HEK293 (cell line): ENCODE measurements at regions of chr3 and their contacts with region 1.

Region 1: GRCh38 chr3:160003520-160004128 is 15.0 kb downstream of the IL12A start:
- H3K4me3 ChIP-seq: no peak overlapping the region
- H3K27ac ChIP-seq: no peak overlapping the region
- H3K4me1 ChIP-seq: no peaks in the 10 kb centered on the region
- CTCF ChIP-seq: peak; percentile 46; the same call in 1 of the 2 replicates

Region 2: DNA sequence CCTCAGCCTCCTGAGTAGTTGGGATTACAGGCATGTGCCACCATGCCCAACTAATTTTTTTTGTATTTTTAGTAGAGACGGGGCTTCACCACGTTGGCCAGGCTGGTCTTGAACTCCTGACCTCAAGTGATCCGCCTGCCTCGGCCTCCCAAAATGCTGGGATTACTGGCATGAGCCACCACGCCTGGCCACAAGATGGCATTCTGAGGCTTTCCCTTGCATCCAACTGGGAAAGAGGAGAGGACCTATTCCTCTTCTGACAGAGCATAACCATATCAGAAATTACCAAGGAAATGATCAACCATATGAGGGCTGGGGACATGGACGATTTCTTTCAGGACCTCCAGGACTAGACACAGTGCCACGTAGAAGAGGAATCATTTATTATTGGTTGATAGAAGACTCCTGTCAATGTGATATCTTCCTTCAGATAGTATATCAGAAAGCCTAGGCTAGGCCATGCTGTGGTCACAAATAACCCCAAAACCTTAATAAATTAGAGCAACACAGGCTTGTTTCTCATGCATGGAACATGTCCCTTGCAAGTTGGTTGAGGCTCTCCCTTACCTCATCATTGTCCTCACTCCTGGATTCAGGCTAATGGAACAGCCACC is 387.3 kb before region 1 on chr3:
- CTCF ChIA-PET with region 1: interaction called, 10 read pairs
- POLR2A ChIA-PET with region 1: no interaction called
- H3K4me3 ChIP-seq: no peak overlapping the region
- H3K27ac ChIP-seq: no peak overlapping the region
- H3K4me1 ChIP-seq: peaks cover 25% of the 10 kb centered on the region
- CTCF ChIP-seq: peak; percentile 71

Region 3: GRCh38 chr3:159828542-159828943 is 175.1 kb before region 1 on chr3:
- CTCF ChIA-PET with region 1: interaction called, 38 read pairs
- POLR2A ChIA-PET with region 1: no interaction called
- H3K4me3 ChIP-seq: no peak overlapping the region
- H3K27ac ChIP-seq: peak overlapping the region; percentile 55
- H3K4me1 ChIP-seq: peaks cover 27% of the 10 kb centered on the region
- CTCF ChIP-seq: no peak

Region 4: DNA sequence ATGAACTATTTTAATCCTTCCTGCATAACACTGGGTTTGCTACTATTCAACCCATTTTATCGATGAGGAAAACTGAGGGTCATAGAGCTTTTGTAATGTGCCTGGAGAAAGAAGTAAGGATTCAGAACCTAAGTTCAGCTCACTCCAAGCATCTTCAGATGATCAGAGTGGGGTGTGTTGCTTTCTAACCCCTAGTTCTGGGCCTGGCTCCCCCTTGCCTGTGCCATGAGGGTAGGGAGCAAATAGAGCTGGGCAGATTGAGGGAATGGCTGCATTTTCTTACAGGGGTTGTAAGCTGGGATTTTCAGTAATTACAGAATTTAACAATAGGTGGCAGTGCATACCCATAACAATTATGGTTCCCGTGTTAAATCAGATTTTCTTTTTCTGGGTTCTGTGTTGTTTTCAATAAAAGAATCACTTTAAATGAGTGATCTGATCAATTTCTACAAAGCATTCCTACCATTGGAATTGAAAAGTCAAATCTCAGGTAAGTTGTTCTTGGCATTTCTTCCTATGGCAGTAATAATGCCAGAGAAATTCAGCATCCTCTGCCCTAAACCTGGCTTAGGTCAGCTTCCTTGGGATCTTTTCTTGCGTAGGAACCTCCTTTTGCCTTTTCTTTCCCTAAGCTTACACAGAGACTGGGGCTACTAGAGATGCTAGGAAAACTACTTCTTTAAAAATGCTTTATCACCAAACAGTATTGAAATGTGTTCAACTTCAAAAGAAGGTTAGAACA is 118.8 kb before region 1 on chr3:
- CTCF ChIA-PET with region 1: interaction called, 108 read pairs
- POLR2A ChIA-PET with region 1: no interaction called
- H3K4me3 ChIP-seq: no peak overlapping the region
- H3K27ac ChIP-seq: no peak overlapping the region; the same call in 1 of the 2 replicates
- H3K4me1 ChIP-seq: peaks cover 11% of the 10 kb centered on the region
- CTCF ChIP-seq: no peak

Region 5: DNA sequence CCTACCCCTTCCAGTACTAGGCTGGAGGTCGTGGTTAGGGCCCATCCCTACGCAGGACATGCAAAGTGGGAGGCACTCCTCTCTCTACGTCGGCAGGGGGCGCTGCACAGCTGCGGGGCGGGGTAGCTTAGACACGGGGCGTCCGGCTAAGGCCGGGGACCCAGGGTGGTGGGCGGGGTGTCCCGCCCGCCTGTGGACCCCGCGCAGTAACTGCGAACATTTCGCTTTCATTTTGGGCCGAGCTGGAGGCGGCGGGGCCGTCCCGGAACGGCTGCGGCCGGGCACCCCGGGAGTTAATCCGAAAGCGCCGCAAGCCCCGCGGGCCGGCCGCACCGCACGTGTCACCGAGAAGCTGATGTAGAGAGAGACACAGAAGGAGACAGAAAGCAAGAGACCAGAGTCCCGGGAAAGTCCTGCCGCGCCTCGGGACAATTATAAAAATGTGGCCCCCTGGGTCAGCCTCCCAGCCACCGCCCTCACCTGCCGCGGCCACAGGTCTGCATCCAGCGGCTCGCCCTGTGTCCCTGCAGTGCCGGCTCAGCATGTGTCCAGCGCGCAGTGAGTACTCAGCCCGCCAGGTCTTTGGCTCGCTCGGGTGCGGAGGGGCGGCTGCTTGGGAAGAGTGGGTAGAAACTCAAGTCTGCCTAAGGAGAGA is 14.9 kb before region 1 on chr3 and contains the start of gene IL12A:
- CTCF ChIA-PET with region 1: interaction called, 29 read pairs
- POLR2A ChIA-PET with region 1: no interaction called
- H3K4me3 ChIP-seq: peak within 1 kb of the TSS; percentile 55
- H3K27ac ChIP-seq: peak within 1 kb of the TSS; percentile 13; the same call in 1 of the 2 replicates
- H3K4me1 ChIP-seq: no peaks in the 10 kb centered on the region
- CTCF ChIP-seq: peak; percentile 83

Region 6: GRCh38 chr3:160225176-160226025 is 221.8 kb after region 1 on chr3 and contains the start of gene C3orf80:
- CTCF ChIA-PET with region 1: no interaction called
- POLR2A ChIA-PET with region 1: no interaction called
- H3K4me3 ChIP-seq: peak within 1 kb of the TSS; percentile 63
- H3K27ac ChIP-seq: peak within 1 kb of the TSS; percentile 35; the same call in 1 of the 2 replicates
- H3K4me1 ChIP-seq: no peaks in the 10 kb centered on the region
- CTCF ChIP-seq: no peak; the same call in 1 of the 2 replicates